ENCODE measurements at regions of chr3 and their contacts with region 1.

Region 1: DNA sequence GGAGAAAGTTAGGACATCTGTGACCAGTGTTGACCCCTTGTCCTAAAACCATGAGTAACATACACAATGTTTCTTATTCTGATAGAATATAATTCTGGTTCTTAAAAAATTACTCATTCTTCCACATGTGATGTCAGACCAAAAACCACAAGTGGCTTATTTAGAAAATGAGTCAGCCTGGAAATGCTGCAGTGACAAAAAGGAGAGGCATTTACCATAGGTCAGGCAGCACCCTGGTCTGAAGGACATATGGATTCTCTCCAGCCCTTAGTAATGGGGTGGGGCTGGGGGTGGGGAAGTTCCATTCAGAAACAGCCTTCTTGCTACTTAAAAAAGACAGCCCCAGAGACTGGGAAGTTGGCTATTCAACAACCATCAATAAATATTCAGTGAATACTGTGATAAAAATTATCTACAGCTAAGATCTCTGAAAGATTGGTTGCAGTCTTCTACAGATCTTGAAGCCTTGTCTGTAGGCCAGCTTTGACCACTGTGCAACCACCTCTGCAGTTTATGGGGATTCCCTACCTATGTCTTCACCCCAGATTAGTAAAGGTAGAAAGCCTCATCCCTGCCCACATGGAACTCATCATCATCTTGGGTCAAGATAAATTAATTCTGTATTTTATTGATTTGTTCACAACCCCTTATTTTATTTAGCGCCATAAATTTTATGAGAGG is 34.9 kb upstream of the TIMP4 start:
- DNase-seq: peak; percentile 79
- H3K4me3 ChIP-seq: no peak overlapping the region
- H3K27ac ChIP-seq: peak overlapping the region; percentile 84
- H3K4me1 ChIP-seq: peaks cover 23% of the 10 kb centered on the region
- H3K27me3 ChIP-seq: no peaks in the 10 kb centered on the region
- CTCF ChIP-seq: no peak
- POLR2A ChIP-seq: no peak

Region 2: DNA sequence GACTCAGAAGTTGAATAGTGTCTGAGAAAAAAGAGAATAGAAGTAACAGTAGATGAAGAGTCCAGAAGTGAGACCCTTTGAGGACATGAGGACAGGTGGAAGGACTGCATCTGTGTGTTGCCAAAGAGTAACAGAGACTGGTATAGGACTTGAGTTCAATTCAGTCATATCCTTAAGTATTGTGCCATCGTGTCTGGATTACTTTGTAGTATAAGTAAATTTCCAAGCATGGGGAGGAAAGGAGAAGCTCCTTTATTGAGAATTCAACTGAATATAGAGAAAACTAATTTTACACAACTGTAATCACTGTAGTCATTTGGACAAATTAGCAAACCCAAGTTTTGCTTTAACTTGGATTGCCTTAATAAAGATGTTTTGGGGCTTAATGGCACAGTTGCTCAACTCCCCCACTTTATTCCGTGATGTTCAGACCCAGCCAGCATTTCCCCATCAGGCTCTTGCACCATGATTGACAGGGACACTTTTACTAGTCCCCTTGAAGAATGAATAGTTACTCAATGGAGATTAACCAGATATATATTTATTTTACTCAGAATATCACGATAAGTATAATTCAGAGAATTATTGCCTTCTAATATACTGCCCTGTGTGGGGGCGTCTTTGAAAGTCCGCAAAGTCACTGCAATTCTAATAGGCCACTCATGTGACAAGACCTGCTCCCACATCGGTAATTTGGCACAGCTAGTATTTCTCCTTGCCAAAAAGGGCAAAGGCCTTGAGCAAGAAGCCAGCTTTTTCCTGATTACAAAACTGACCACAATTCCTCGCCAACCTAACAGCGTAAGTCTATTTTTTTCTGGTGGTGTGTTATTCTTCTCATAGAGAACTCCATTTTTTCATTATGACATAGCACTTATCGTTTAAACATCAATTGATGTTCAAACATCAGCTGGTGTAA is 156.5 kb after region 1 on chr3:
- CTCF ChIA-PET with region 1: no interaction called
- POLR2A ChIA-PET with region 1: no interaction called
- dilution Hi-C with region 1: no loop called
- intact Hi-C with region 1: loop called (anchors 5 kb)
- DNase-seq: peak; percentile 71
- H3K4me3 ChIP-seq: no peak overlapping the region
- H3K27ac ChIP-seq: no peak overlapping the region
- H3K4me1 ChIP-seq: no peaks in the 10 kb centered on the region
- H3K27me3 ChIP-seq: peaks cover 4 to 11% of the 10 kb centered on the region in 2 experiments
- CTCF ChIP-seq: no peak
- POLR2A ChIP-seq: no peak

Region 3: DNA sequence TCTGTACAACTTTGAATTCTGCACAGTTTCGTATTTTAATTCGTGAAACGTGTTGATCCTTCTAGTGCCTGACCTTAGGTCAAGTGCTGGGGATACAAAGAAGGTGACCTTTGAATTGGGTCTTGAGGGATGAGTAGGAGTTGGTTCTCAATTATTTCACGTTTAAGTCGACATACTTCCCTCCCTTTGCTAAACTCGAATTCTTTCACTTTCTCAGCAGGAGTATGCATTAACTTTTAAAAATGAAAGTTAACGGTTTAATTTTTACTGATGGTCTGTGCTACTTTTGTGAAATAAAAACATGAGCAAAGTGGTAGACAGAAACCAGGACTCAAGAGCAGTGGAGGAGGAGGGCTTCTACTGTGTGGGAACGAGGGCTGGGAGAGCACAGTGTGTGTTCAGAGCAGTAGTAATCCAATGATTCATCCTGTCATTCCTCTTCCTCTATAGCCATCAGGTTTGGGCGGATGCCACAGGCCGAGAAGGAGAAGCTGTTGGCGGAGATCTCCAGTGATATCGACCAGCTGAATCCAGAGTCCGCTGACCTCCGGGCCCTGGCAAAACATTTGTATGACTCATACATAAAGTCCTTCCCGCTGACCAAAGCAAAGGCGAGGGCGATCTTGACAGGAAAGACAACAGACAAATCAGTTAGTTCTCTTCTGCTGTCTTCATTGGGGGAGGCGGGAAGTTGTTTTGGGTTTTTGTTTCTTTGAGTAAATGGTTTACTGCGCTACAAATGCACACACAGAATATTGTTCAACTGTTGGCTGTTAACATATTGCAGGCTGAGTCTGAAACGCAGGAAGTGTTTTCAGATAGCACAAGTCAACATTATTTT is 212.0 kb after region 1 on chr3:
- CTCF ChIA-PET with region 1: no interaction called
- POLR2A ChIA-PET with region 1: no interaction called
- dilution Hi-C with region 1: no loop called
- intact Hi-C with region 1: loop called (anchors 1 kb)
- DNase-seq: peak; percentile 98
- H3K4me3 ChIP-seq: peak overlapping the region in 1 of 3 experiments; percentile 10
- H3K27ac ChIP-seq: peak overlapping the region; percentile 61
- H3K4me1 ChIP-seq: peaks cover 24% of the 10 kb centered on the region
- H3K27me3 ChIP-seq: no peaks in the 10 kb centered on the region
- CTCF ChIP-seq: no peak
- POLR2A ChIP-seq: no peak

Measured in endothelial cell of umbilical vein (primary cell).